HCT116 (cell line): ENCODE measurements at regions of chrX and their contacts with region 1.

Region 1: GRCh38 chrX:1124531-1124930 is 87.9 kb downstream of the CRLF2 start:
- DNase-seq: no peak
- ATAC-seq: no peak
- H3K4me3 ChIP-seq: no peak overlapping the region
- H3K27ac ChIP-seq: no peak overlapping the region
- H3K4me1 ChIP-seq: no peaks in the 10 kb centered on the region
- H3K27me3 ChIP-seq: peaks cover 4% of the 10 kb centered on the region; the same call in 1 of the 2 replicates
- CTCF ChIP-seq: no peak
- POLR2A ChIP-seq: no peak
- RAD21 ChIP-seq: no peak

Region 2: DNA sequence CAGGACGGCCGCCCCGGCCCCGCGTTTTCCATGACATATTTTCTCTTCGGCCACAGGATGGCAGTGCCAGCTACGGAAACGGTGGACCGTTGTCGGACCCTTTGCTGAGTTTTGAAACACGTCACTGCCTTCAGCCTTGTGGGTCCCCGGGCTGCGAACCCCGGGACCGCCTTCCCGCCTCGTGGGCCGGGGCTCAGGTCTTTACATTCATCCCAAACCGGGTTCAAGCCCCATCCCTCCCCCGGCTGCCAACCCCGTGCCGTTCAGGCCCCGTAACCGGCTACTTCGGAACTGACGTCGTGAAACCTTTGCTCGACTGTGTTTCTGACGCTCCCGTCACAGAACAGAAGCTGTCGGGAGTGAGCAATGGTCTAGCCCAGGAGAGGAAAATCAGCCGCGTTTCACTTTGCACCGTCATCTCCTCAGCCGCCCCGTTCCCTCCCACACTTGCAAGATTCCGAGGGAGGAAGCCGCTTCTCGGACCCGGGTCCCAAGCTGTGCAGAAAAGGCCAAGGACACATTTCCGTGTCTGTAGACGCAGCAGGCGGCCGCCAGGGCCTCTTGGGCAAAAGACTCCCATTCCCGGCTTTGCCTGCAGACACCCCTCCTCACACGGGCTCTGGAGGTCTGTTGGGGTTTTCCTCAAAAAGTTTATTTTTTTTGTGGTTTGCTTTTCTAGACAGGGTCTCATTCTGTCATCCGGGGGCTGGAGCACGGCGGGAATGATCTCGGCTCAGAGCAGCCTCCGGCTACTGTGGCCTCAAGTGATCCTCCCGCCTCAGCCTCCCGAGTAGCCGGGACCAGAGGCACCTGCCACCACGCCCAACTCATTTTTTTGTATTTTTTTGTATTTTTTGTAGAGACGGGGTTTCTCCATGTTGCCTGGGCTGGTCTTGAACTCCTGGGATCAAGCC is 696.5 kb before region 1 on chrX:
- CTCF ChIA-PET with region 1: no interaction called
- POLR2A ChIA-PET with region 1: no interaction called
- RAD21 ChIA-PET with region 1: no interaction called
- intact Hi-C with region 1: loop called (anchors 5 kb)
- DNase-seq: no peak
- ATAC-seq: peak; percentile 44
- H3K4me3 ChIP-seq: no peak overlapping the region
- H3K27ac ChIP-seq: no peak overlapping the region
- H3K4me1 ChIP-seq: no peaks in the 10 kb centered on the region
- H3K27me3 ChIP-seq: no peaks in the 10 kb centered on the region
- CTCF ChIP-seq: peak in 2 of 3 experiments; percentile 17 to 25; a peak in 3 of 6 replicates
- POLR2A ChIP-seq: no peak
- RAD21 ChIP-seq: peak; percentile 48